ENCODE measurements at regions of chr17 and their contacts with region 1.

Region 1: DNA sequence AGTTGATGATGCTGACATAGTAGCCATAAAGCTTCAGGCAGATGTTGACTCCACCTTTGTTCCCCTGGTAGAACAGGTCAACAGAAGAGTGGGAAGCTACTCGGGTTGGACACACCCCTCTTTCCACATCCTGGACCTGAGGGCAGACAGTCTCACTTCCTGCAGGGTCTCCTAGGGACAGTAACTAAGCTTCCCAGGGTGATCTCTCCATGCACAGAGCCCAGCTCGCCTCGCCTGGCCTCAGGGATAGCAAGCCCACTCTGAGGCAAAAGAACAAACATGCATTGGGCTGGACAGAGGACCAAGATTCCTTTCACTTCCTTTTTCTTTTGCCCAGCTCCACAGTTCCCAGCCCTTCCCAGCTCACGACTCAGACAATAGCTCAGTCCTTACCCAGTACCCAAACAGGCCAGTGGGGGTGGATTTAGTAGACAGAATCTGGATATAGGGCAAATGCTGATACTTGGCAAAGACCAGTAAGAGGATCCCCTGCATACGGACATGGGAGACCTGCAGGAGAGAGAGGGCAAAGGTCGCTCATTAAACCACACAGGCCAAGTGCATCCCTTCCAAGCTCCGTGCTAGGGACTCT is 7.0 kb downstream of the INPP5K start:
- DNase-seq: no peak
- ATAC-seq: no peak

Region 2: GRCh38 chr17:1491443-1492248 is 17.7 kb before region 1 on chr17:
- intact Hi-C with region 1: loop called (anchors 2 kb)
- DNase-seq: peak; percentile 90
- ATAC-seq: peak; percentile 57

Measured in Right ventricle myocardium inferior (tissue), 1 donor.